SK-N-SH (cell line): ENCODE measurements at regions of chr11 and their contacts with region 1.

Region 1: GRCh38 chr11:250740-251299 is 14.0 kb downstream of the PSMD13 start:
- DNase-seq: peak; percentile 66
- H3K4me3 ChIP-seq: no peak overlapping the region; a peak in 1 of 4 replicates
- H3K27ac ChIP-seq: no peak overlapping the region; a peak in 1 of 4 replicates
- H3K4me1 ChIP-seq: no peaks in the 10 kb centered on the region
- H3K27me3 ChIP-seq: no peaks in the 10 kb centered on the region
- CTCF ChIP-seq: peak; percentile 71
- EP300 ChIP-seq: no peak
- RAD21 ChIP-seq: peak; percentile 47

Region 2: DNA sequence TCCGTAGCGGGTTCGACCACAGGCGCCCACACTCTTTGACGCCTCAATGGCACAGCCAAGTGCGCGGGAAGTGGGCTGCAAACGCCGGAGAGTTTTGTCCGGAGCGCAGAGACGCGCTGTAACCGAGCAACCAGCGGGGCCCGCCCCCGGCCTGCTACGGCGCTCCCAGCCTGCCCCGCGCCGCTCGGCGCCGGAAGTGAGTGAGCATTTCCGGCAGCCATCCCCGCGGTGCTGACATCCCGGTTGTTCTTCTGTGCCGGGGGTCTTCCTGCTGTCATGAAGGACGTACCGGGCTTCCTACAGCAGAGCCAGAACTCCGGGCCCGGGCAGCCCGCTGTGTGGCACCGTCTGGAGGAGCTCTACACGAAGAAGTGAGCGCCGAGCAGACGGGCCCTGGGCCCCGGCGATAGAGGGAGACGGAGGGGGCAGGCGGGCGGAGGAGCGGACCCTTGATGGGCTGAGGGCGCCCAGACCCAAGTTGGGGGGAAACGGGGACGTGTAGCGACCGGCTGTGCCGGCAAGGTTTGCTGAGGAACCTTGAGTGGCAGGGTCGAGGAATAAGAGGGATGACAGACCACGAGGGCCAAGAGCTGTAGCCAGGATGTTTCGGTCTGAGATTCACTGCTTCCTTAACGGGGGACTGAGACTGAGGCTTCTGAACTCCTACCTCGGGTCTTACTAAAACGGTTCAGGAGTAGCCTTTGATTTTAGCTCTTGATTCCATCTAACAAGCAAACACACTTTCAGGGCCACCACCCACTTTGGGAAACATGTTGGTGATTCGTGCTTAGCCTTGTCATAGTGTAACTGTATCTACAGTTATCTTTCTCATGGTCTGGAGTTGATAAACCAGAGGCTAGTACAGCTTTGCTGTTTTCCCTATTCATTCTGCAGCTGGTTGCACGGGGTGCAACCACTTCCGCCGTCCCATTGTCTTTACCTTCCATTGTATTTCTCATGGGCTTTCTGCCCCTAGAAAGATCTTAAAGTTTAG is 13.7 kb before region 1 on chr11 and contains the start of gene PSMD13:
- CTCF ChIA-PET with region 1: interaction called, 20 read pairs
- POLR2A ChIA-PET with region 1: interaction called, 3 read pairs
- DNase-seq: peak; percentile 96
- H3K4me3 ChIP-seq: peak within 1 kb of the TSS; percentile 93 to 95
- H3K27ac ChIP-seq: peak within 1 kb of the TSS; percentile 95 to 97
- H3K4me1 ChIP-seq: peaks cover 2 to 4% of the 10 kb centered on the region in 2 experiments; a peak in 3 of 4 replicates
- H3K27me3 ChIP-seq: no peaks in the 10 kb centered on the region
- CTCF ChIP-seq: no peak
- EP300 ChIP-seq: no peak
- RAD21 ChIP-seq: no peak
- polyA plus RNA-seq, gene PSMD13: 196 and 227 TPM in 2 replicates

Region 3: DNA sequence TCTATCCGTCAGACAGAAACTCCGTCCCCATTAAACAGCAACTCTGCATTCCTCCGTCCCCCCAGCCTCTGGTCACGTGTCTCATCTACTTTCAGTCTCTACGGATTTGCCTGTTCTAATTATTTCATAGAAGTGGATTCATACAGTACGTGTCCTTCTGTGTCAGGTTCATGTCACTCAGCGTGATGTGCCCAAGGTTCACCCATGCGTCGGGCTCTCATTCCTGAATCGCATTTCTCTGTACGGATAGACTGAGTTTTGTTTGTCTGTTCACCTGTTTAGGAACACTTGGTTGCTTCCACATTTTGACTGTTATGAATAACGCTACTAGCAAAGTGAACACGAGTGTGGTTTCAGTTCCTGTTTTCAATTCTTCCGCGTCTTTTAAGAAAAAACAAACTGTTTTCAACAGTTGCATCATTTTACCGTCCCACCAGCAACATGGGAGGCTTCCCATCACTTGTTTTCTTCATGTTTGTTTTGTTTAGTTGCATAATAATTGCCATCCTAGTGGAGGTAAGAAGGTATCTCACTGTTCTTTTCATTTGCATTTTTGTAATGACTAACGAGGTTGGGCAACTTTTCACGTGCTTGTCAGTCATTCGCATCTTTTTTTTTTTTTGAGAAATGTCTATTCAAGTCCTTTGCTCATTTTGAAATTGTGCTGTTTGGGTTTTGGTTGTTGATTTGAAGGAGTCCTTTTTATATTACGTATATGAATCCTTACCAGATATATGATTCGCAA is 18.5 kb after region 1 on chr11:
- CTCF ChIA-PET with region 1: interaction called, 19 read pairs
- POLR2A ChIA-PET with region 1: no interaction called
- DNase-seq: no peak
- H3K4me3 ChIP-seq: no peak overlapping the region
- H3K27ac ChIP-seq: no peak overlapping the region
- H3K4me1 ChIP-seq: peaks cover 0 to 6% of the 10 kb centered on the region in 2 experiments; a peak in 1 of 4 replicates
- H3K27me3 ChIP-seq: peaks cover 9% of the 10 kb centered on the region; the same call in 1 of the 2 replicates
- CTCF ChIP-seq: no peak
- EP300 ChIP-seq: no peak
- RAD21 ChIP-seq: no peak

Region 4: GRCh38 chr11:355581-356458 is 105.0 kb after region 1 on chr11:
- CTCF ChIA-PET with region 1: interaction called, 10 read pairs
- POLR2A ChIA-PET with region 1: no interaction called
- DNase-seq: peak; percentile 90
- H3K4me3 ChIP-seq: peak overlapping the region in 1 of 2 experiments; percentile 17; a peak in 1 of 4 replicates
- H3K27ac ChIP-seq: peak overlapping the region; percentile 80 to 85
- H3K4me1 ChIP-seq: peaks cover 7% of the 10 kb centered on the region in 2 experiments; a peak in 3 of 4 replicates
- H3K27me3 ChIP-seq: no peaks in the 10 kb centered on the region
- CTCF ChIP-seq: no peak
- EP300 ChIP-seq: no peak; a peak in 1 of 4 replicates
- RAD21 ChIP-seq: no peak; the same call in 1 of the 2 replicates

Region 5: GRCh38 chr11:390175-390574 is 139.4 kb after region 1 on chr11:
- CTCF ChIA-PET with region 1: no interaction called
- POLR2A ChIA-PET with region 1: no interaction called
- DNase-seq: no peak
- H3K4me3 ChIP-seq: no peak overlapping the region
- H3K27ac ChIP-seq: no peak overlapping the region
- H3K4me1 ChIP-seq: peaks cover 0 to 5% of the 10 kb centered on the region in 2 experiments; a peak in 1 of 4 replicates
- H3K27me3 ChIP-seq: no peaks in the 10 kb centered on the region
- CTCF ChIP-seq: no peak
- EP300 ChIP-seq: no peak
- RAD21 ChIP-seq: no peak

Region 6: DNA sequence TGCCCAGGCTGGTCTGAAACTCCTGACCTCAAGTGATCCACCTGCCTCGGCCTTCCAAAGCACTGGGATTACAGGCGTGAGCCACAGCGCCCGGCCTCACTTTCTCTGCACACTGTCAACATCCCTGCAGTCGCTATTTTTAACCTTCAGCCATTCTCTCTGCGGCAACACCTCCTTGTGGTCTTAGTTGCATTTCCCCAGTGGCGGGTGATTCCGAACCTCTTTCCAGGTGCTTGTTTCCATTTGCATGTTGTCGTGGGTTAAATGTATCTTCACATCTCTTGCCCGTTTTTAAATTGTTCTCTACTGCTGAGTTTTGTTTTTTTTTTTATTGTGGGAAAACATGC is 378.4 kb after region 1 on chr11:
- CTCF ChIA-PET with region 1: no interaction called
- POLR2A ChIA-PET with region 1: no interaction called
- DNase-seq: no peak
- H3K4me3 ChIP-seq: no peak overlapping the region
- H3K27ac ChIP-seq: peak overlapping the region in 1 of 2 experiments; percentile 47; a peak in 2 of 4 replicates
- H3K4me1 ChIP-seq: no peaks in the 10 kb centered on the region
- H3K27me3 ChIP-seq: no peaks in the 10 kb centered on the region
- CTCF ChIP-seq: no peak
- EP300 ChIP-seq: no peak
- RAD21 ChIP-seq: no peak